Transverse colon (tissue), 4 donors: ENCODE measurements at regions of chr3 and their contacts with region 1.

Region 1: GRCh38 chr3:115692887-115693524 is 69.7 kb downstream of the GAP43 start:
- DNase-seq: peak; percentile 77
- H3K4me3 ChIP-seq: no peak overlapping the region
- H3K27ac ChIP-seq: no peak overlapping the region
- H3K4me1 ChIP-seq: peaks cover 0 to 4% (median 0%) of the 10 kb centered on the region in 4 donors
- H3K27me3 ChIP-seq: no peaks in the 10 kb centered on the region
- CTCF ChIP-seq: peak; percentile 70 to 77 (median 76)
- EP300 ChIP-seq: no peak
- POLR2A ChIP-seq: no peak

Region 2: GRCh38 chr3:114827495-114827894 is 865.5 kb before region 1 on chr3:
- in situ Hi-C with region 1: loop called in 2 of 4 experiments (anchors 25 kb)
- intact Hi-C with region 1: no loop called
- DNase-seq: no peak
- H3K4me3 ChIP-seq: no peak overlapping the region
- H3K27ac ChIP-seq: no peak overlapping the region
- H3K4me1 ChIP-seq: no peaks in the 10 kb centered on the region
- H3K27me3 ChIP-seq: no peaks in the 10 kb centered on the region
- CTCF ChIP-seq: peak; percentile 37 to 54 (median 47)
- EP300 ChIP-seq: no peak
- POLR2A ChIP-seq: no peak

Region 3: GRCh38 chr3:115217678-115218451 is 475.1 kb before region 1 on chr3:
- in situ Hi-C with region 1: loop called in 2 of 4 experiments (anchors 25 kb)
- intact Hi-C with region 1: loop called (anchors 10 kb)
- DNase-seq: peak; percentile 52
- H3K4me3 ChIP-seq: no peak overlapping the region
- H3K27ac ChIP-seq: peak overlapping the region in 1 of 4 donors; percentile 37
- H3K4me1 ChIP-seq: peaks cover 0 to 22% (median 8%) of the 10 kb centered on the region in 4 donors
- H3K27me3 ChIP-seq: no peaks in the 10 kb centered on the region
- CTCF ChIP-seq: peak; percentile 50 to 64 (median 60)
- EP300 ChIP-seq: no peak
- POLR2A ChIP-seq: no peak

Region 4: DNA sequence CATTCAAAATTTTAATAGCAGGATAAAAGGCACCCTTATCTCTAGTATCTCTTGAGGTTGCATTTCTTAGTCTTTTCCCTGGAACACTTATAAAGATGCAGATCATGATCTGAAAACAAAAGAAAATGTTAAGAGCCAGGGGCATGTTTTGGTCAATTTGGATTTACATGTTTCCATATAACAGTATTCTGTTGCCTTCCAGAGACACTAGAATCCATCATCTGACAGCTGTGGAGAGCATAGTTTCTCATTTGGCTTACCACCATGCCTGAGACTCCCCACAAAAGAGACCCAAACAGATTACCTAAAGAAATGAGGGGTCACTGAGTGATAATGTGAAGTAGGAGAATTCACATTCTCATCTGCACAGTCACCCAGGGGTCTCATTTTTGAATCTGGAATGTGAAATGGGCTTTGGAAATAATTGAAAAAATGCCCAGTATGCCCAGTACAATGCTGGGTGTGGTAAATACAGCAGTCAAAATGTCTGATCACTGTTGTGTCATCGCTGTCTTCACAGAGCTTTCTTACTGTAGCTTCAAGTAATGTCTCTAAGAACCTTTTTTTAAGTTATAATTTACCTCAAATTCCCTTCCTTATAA is 466.1 kb before region 1 on chr3:
- in situ Hi-C with region 1: loop called in 3 of 4 experiments (anchors 25 kb)
- intact Hi-C with region 1: loop called (anchors 10 kb)
- DNase-seq: no peak
- H3K4me3 ChIP-seq: no peak overlapping the region
- H3K27ac ChIP-seq: no peak overlapping the region
- H3K4me1 ChIP-seq: no peaks in the 10 kb centered on the region
- H3K27me3 ChIP-seq: no peaks in the 10 kb centered on the region
- CTCF ChIP-seq: no peak
- EP300 ChIP-seq: no peak
- POLR2A ChIP-seq: no peak

Region 5: DNA sequence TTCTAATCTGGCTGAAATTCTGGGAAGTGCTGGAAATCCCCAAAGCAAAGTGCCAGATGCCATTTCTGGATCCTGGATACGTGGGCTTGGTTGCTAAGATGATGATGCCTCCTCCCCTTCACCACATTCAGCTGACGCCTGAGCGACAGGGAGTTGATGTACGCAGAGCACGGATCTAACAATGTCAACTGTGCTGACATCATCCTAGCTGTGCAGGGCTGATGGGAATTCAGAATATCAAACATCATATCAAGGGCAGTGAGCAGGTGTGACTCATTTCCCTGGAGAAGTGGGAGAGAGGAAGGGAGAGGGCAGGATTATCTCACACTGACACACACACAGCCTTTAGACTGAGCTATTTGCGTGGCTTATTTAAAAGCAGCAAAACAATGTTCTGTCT is 453.3 kb before region 1 on chr3:
- in situ Hi-C with region 1: loop called in 1 of 4 experiments (anchors 25 kb)
- intact Hi-C with region 1: no loop called
- DNase-seq: no peak
- H3K4me3 ChIP-seq: no peak overlapping the region
- H3K27ac ChIP-seq: no peak overlapping the region
- H3K4me1 ChIP-seq: no peaks in the 10 kb centered on the region
- H3K27me3 ChIP-seq: no peaks in the 10 kb centered on the region
- CTCF ChIP-seq: no peak
- EP300 ChIP-seq: no peak
- POLR2A ChIP-seq: no peak

Region 6: GRCh38 chr3:115680803-115681345 is 12.1 kb before region 1 on chr3:
- in situ Hi-C with region 1: no loop called
- intact Hi-C with region 1: no loop called
- DNase-seq: no peak
- H3K4me3 ChIP-seq: no peak overlapping the region
- H3K27ac ChIP-seq: no peak overlapping the region
- H3K4me1 ChIP-seq: no peaks in the 10 kb centered on the region
- H3K27me3 ChIP-seq: peaks cover 4% of the 10 kb centered on the region
- CTCF ChIP-seq: no peak
- EP300 ChIP-seq: no peak
- POLR2A ChIP-seq: no peak